Activated naive CD8-positive, alpha-beta T cell treated with anti-CD3 and anti-CD28 coated beads, Interleukin-2, amount 10 ng/mL, durations not matched to agents 7 days and 5 days (primary cell): ENCODE measurements at regions of chr6 and their contacts with region 1.

Region 1: GRCh38 chr6:4018172-4018905 is 60.6 kb downstream of the FAM217A start:
- DNase-seq: peak; percentile 95
- ATAC-seq: peak; percentile 69
- H3K4me3 Mint-ChIP-seq: peak overlapping the region; percentile 97
- H3K27ac Mint-ChIP-seq: peak overlapping the region; percentile 99
- H3K4me1 Mint-ChIP-seq: peaks cover 46% of the 10 kb centered on the region
- H3K27me3 Mint-ChIP-seq: no peaks in the 10 kb centered on the region

Region 2: GRCh38 chr6:4135665-4136353 is 117.5 kb after region 1 on chr6:
- POLR2A ChIA-PET with region 1: interaction called, 38 read pairs
- DNase-seq: peak; percentile 92
- ATAC-seq: peak; percentile 89
- H3K4me3 Mint-ChIP-seq: peak overlapping the region; percentile 82
- H3K27ac Mint-ChIP-seq: peak overlapping the region; percentile 76
- H3K4me1 Mint-ChIP-seq: peaks cover 17% of the 10 kb centered on the region
- H3K27me3 Mint-ChIP-seq: no peaks in the 10 kb centered on the region